ENCODE measurements at regions of chr2 and their contacts with region 1.

Region 1: DNA sequence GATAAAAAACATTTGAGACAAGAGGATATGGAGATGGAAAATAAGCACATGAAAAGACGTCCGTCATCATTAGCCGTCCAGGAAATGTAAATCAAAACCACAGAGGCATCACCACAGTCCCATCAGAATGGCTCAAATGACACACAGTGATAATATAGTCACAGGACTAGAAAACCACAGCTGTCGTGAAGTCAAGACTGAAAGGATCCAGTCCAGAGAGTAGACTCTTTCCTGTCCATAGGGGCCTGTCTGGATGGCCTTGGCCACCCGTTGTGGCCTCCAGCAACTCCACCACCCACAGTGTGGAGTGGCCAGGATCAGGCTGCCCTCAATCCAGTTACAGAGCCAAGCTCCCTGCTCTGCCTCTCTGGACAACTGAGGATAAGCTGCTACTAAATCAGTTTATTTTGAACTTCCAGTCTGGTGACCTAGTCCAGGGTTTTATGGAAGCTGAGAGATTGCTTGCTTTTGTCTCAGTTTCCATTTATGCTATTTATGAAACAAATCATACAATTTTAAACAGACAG is 60.4 kb downstream of the RHOB start:
- DNase-seq: no peak
- H3K4me3 ChIP-seq: no peak overlapping the region
- H3K4me3 Mint-ChIP-seq: no peak overlapping the region
- H3K27ac Mint-ChIP-seq: no peak overlapping the region
- H3K4me1 ChIP-seq: no peaks in the 10 kb centered on the region; the same call in 1 of the 2 replicates
- H3K4me1 Mint-ChIP-seq: peaks cover 17% of the 10 kb centered on the region
- H3K27me3 ChIP-seq: no peaks in the 10 kb centered on the region
- H3K27me3 Mint-ChIP-seq: no peaks in the 10 kb centered on the region
- CTCF ChIP-seq: no peak

Region 2: DNA sequence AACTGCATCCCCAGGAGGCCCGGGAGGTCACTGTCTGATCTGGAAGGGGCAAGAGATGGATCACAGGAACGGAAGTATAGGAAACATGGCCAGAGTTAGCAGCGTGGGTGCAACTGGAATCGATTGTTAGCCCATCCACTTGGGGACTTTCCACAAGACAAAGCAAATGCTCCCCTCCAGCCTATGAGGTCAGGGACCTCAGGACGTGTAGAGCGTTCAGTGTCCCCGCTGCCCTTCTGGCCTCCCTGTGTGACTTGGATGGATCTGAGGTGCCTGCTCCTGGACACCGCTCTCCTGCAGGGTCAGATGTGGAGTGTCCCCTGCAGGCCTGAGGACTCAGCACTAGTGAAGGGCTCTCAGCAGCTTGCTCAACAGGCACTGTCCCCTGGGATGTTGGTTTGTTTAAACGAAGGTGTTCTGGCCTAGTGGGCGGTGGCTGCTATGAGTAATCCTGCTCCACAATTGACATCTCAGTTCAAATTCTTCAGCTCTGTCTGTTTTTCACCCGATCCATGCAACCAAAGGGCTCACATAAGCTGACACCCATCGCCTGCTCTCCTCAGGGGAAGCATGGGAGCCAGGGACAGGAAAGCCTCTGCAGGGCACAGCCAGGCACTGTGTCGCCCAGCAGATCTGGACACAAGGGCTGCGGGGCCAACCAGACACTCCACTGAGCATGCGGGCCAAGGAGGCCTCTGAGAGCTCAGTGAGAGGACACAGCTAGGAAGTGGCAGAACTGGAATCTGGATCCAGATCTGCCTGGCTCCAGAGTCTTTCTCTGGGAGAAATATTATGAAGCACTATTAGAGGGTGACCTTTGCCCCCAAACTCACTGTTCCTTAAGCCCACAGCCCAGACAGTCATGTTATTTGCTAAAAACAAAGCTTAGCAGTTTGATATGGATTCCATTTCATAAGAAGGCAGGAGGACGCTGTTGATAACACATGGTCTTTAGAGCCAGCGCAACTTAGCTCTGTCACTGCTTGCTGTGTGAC is 18.1 kb after region 1 on chr2:
- CTCF ChIA-PET with region 1: interaction called, 3 read pairs
- POLR2A ChIA-PET with region 1: no interaction called
- intact Hi-C with region 1: loop called (anchors 2 kb)
- DNase-seq: peak; percentile 59 to 66
- H3K4me3 ChIP-seq: no peak overlapping the region
- H3K4me3 Mint-ChIP-seq: no peak overlapping the region
- H3K27ac Mint-ChIP-seq: no peak overlapping the region
- H3K4me1 ChIP-seq: peaks cover 14% of the 10 kb centered on the region
- H3K4me1 Mint-ChIP-seq: peaks cover 16% of the 10 kb centered on the region
- H3K27me3 ChIP-seq: no peaks in the 10 kb centered on the region
- H3K27me3 Mint-ChIP-seq: no peaks in the 10 kb centered on the region
- CTCF ChIP-seq: peak in 1 of 2 experiments; percentile 29